Naive thymus-derived CD4-positive, alpha-beta T cell (primary cell): ENCODE measurements at regions of chr11 and their contacts with region 1.

Region 1: DNA sequence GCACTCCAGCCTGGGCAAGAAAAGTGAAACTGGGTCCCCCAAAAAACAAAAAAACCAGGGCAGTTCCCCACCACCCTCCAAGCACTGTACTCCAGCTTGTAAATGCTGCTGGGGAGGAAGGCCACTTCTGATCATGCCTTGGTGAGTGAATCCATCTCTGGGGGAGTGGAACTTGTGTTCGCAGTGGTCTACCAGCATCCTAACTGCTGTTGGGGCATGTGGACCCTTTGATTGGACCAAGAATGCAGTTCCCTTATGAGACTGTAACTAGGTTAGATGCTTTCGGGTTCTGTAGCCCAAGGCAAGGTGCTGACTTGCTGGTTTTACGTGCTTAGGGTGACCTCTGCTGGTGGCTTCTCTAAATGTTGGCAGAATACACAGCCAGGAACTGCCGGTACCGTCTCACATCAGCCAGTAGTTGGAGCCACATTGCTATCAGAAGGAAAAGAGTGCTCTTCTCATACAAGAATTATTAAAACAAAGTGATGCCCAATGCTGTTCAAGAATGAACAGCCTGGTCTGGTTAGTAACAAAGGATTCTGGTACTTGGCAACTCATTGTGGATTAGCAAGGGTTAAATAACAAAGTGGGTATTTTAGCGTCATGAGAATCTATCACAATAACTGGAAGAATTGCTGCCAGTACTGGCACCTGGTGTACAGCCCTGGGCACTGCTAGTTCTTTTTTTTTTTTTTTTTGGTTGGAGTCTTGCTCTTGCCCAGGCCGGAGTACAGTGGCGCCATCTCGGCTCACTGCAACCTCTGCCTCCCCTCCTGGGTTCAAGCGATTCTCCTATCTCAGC is 13.0 kb downstream of the EIF1AD start:
- DNase-seq: peak; percentile 66 to 95 (median 91)
- ATAC-seq: peak; percentile 100
- H3K4me3 ChIP-seq: no peak overlapping the region
- H3K4me3 Mint-ChIP-seq: no peak overlapping the region
- H3K27ac ChIP-seq: no peak overlapping the region
- H3K27ac Mint-ChIP-seq: peak overlapping the region; percentile 0 to 90 (median 74)
- H3K4me1 ChIP-seq: no peaks in the 10 kb centered on the region
- H3K4me1 Mint-ChIP-seq: peaks cover 5 to 7% (median 6%) of the 10 kb centered on the region in 7 donors
- H3K27me3 ChIP-seq: no peaks in the 10 kb centered on the region
- H3K27me3 Mint-ChIP-seq: no peaks in the 10 kb centered on the region

Region 2: GRCh38 chr11:65773784-65774411 is 215.1 kb before region 1 on chr11:
- CTCF ChIA-PET with region 1: no interaction called
- POLR2A ChIA-PET with region 1: no interaction called
- intact Hi-C with region 1: loop called in 1 of 2 experiments (anchors 1 kb)
- DNase-seq: no peak
- ATAC-seq: no peak
- H3K4me3 ChIP-seq: no peak overlapping the region
- H3K4me3 Mint-ChIP-seq: no peak overlapping the region
- H3K27ac ChIP-seq: no peak overlapping the region
- H3K27ac Mint-ChIP-seq: no peak overlapping the region
- H3K4me1 ChIP-seq: peaks cover 0 to under 1% of the 10 kb centered on the region in 2 donors
- H3K4me1 Mint-ChIP-seq: peaks cover 11 to 20% (median 14%) of the 10 kb centered on the region in 7 donors
- H3K27me3 ChIP-seq: no peaks in the 10 kb centered on the region
- H3K27me3 Mint-ChIP-seq: no peaks in the 10 kb centered on the region

Region 3: DNA sequence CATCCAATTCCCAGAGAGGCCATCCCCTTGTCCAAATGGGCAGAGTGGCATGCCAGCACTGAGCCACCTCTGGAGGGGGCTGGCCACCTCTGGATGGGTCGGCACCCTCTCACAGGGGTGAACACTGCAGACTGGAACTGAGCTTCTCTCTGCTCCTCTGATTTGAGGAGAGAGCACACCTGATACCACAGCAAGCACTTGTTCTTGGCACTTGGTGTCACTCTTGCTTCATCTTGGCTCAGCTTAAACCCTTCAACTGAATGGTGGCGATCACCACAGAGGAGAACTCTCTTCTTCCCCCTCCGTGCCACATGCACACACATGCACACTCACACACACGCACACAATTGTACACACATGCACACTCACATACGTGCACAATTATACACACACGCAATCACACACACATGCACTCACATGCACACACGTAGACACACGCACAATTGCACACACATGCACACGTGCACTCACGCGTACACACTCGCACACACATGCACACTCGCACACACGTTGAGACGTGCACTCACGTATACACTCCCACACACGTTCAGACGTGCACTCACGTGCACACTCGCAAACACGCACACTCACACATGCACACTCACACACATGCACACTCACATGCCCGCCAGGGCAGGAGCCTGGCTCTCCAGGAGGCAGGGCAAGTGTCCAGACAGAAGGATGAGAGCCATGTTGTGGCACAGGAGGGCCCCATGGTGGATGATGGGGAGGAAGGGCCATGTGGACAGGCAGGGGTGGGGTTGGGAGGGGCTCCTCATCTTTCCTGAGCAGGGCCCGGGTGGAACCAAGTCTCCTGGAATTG is 178.7 kb before region 1 on chr11:
- CTCF ChIA-PET with region 1: interaction called, 3 read pairs
- POLR2A ChIA-PET with region 1: no interaction called
- intact Hi-C with region 1: loop called in 1 of 2 experiments (anchors 1 kb)
- DNase-seq: peak in 3 of 9 donors; percentile 27 to 31 (median 29)
- ATAC-seq: peak; percentile 73
- H3K4me3 ChIP-seq: no peak overlapping the region
- H3K4me3 Mint-ChIP-seq: no peak overlapping the region
- H3K27ac ChIP-seq: no peak overlapping the region
- H3K27ac Mint-ChIP-seq: peak overlapping the region in 1 of 9 donors; percentile 59
- H3K4me1 ChIP-seq: no peaks in the 10 kb centered on the region
- H3K4me1 Mint-ChIP-seq: peaks cover 0 to 8% (median 2%) of the 10 kb centered on the region in 7 donors
- H3K27me3 ChIP-seq: no peaks in the 10 kb centered on the region
- H3K27me3 Mint-ChIP-seq: peaks cover 0 to 15% (median 0%) of the 10 kb centered on the region in 5 donors

Region 4: GRCh38 chr11:65919146-65920033 is 69.6 kb before region 1 on chr11 and contains the start of gene DRAP1:
- CTCF ChIA-PET with region 1: interaction called, 4 read pairs
- POLR2A ChIA-PET with region 1: interaction called, 4 read pairs
- intact Hi-C with region 1: loop called in 1 of 2 experiments (anchors 1 kb)
- DNase-seq: peak; percentile 95 to 98 (median 97)
- ATAC-seq: peak; percentile 93
- H3K4me3 ChIP-seq: peak within 1 kb of the TSS; percentile 83
- H3K4me3 Mint-ChIP-seq: peak within 1 kb of the TSS; percentile 86 to 96 (median 93)
- H3K27ac ChIP-seq: peak within 1 kb of the TSS; percentile 95
- H3K27ac Mint-ChIP-seq: peak within 1 kb of the TSS; percentile 79 to 96 (median 90)
- H3K4me1 ChIP-seq: peaks cover 26 to 28% of the 10 kb centered on the region in 2 donors
- H3K4me1 Mint-ChIP-seq: peaks cover 32 to 61% (median 36%) of the 10 kb centered on the region in 7 donors
- H3K27me3 ChIP-seq: no peaks in the 10 kb centered on the region
- H3K27me3 Mint-ChIP-seq: no peaks in the 10 kb centered on the region
- total RNA-seq, gene DRAP1: 72.6 to 166 (median 81.9) TPM

Region 5: GRCh38 chr11:65961232-65961901 is 27.6 kb before region 1 on chr11 and contains the start of gene SART1:
- CTCF ChIA-PET with region 1: no interaction called
- POLR2A ChIA-PET with region 1: interaction called, 3 read pairs
- intact Hi-C with region 1: loop called in 1 of 2 experiments (anchors 1 kb)
- DNase-seq: peak; percentile 81 to 97 (median 94)
- ATAC-seq: peak; percentile 96
- H3K4me3 ChIP-seq: peak within 1 kb of the TSS; percentile 83
- H3K4me3 Mint-ChIP-seq: peak within 1 kb of the TSS; percentile 93 to 99 (median 98)
- H3K27ac ChIP-seq: peak within 1 kb of the TSS; percentile 96
- H3K27ac Mint-ChIP-seq: peak within 1 kb of the TSS; percentile 96 to 99 (median 98)
- H3K4me1 ChIP-seq: peaks cover 27 to 38% of the 10 kb centered on the region in 2 donors
- H3K4me1 Mint-ChIP-seq: peaks cover 23 to 64% (median 54%) of the 10 kb centered on the region in 7 donors
- H3K27me3 ChIP-seq: no peaks in the 10 kb centered on the region
- H3K27me3 Mint-ChIP-seq: no peaks in the 10 kb centered on the region
- total RNA-seq, gene SART1: 65.9 to 102 (median 90.8) TPM

Region 6: GRCh38 chr11:66480117-66480938 is 491.3 kb after region 1 on chr11 and contains the start of gene DPP3:
- CTCF ChIA-PET with region 1: no interaction called
- POLR2A ChIA-PET with region 1: no interaction called
- intact Hi-C with region 1: no loop called
- DNase-seq: peak; percentile 87 to 97 (median 95)
- ATAC-seq: peak; percentile 99
- H3K4me3 ChIP-seq: peak within 1 kb of the TSS; percentile 86
- H3K4me3 Mint-ChIP-seq: peak within 1 kb of the TSS; percentile 86 to 92 (median 90)
- H3K27ac ChIP-seq: peak within 1 kb of the TSS; percentile 90
- H3K27ac Mint-ChIP-seq: peak within 1 kb of the TSS; percentile 75 to 91 (median 90)
- H3K4me1 ChIP-seq: peaks cover 9 to 14% of the 10 kb centered on the region in 2 donors
- H3K4me1 Mint-ChIP-seq: peaks cover 9 to 37% (median 17%) of the 10 kb centered on the region in 7 donors
- H3K27me3 ChIP-seq: no peaks in the 10 kb centered on the region
- H3K27me3 Mint-ChIP-seq: no peaks in the 10 kb centered on the region
- total RNA-seq, gene DPP3: 15.8 to 75.7 (median 19.4) TPM